ENCODE measurements at regions of chr2 and their contacts with region 1.

Region 1: DNA sequence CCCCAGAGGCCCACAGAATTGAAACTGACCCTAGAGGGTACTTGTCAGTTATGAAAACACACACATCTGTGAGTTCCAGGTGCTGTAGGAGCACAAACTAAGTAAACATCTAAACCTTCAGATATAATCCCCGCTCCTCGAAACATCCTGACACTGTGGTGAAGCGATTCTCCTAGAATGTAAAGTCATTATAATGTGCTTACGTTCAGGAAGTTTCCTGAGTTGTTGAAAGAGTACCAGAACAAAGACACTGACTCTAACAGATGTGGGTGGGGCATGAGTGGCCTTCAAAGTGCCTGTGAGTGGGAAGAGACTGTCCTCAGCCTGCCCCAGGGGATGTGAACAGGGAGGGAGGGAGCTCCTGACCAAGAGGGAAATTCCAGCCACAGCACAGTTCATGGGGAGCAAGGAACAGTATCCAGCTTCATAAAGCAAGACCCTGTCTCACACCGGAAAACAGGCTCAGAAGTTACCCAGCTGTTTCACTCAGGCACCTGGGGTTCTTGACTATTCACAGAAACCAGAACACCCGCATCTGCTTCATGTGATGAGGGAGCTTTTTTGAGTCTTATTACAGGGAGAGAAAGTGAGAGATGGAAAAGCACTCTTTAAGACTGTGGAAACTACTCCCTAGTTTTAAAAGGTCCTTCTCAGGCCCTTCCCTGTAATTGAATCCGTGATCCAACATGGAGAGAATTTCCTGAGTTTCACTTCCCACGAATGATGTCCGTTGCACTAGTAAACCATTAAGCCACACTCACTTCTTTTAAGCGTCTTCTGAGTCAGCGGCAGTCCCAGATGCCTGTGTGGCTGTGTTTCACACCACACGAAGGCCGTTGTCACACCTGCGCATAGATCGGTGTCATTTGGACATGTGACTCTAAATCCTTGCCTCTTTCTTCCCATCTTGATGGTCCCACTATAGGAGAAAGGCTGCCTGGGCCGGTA is 88.6 kb upstream of the EML6 start:
- DNase-seq: peak; percentile 59 to 86
- ATAC-seq: peak; percentile 72 to 87 (median 84)
- H3K4me3 ChIP-seq: peak overlapping the region in 4 of 10 donors; percentile 2 to 32 (median 12)
- H3K27ac ChIP-seq: peak overlapping the region; percentile 62 to 95 (median 88)
- H3K4me1 ChIP-seq: peaks cover 65 to 100% (median 100%) of the 10 kb centered on the region in 9 donors
- H3K27me3 ChIP-seq: no peaks in the 10 kb centered on the region
- CTCF ChIP-seq: no peak

Region 2: GRCh38 chr2:54206596-54206995 is 428.2 kb before region 1 on chr2:
- intact Hi-C with region 1: loop called in 1 of 10 experiments (anchors 10 kb)
- DNase-seq: no peak
- ATAC-seq: peak in 4 of 8 donors; percentile 34 to 66 (median 42)
- H3K4me3 ChIP-seq: no peak overlapping the region
- H3K27ac ChIP-seq: peak overlapping the region in 1 of 10 donors; percentile 84
- H3K4me1 ChIP-seq: peaks cover 2 to 36% (median 33%) of the 10 kb centered on the region in 9 donors
- H3K27me3 ChIP-seq: no peaks in the 10 kb centered on the region
- CTCF ChIP-seq: peak; percentile 50 to 87 (median 71)

Region 3: GRCh38 chr2:54461261-54461660 is 173.6 kb before region 1 on chr2:
- intact Hi-C with region 1: loop called in 1 of 10 experiments (anchors 10 kb)
- DNase-seq: no peak
- ATAC-seq: peak in 5 of 8 donors; percentile 11 to 50 (median 41)
- H3K4me3 ChIP-seq: peak overlapping the region in 2 of 10 donors; percentile 0 to 79
- H3K27ac ChIP-seq: peak overlapping the region in 9 of 10 donors; percentile 30 to 98 (median 75)
- H3K4me1 ChIP-seq: peaks cover 12 to 85% (median 72%) of the 10 kb centered on the region in 9 donors
- H3K27me3 ChIP-seq: peaks cover 0 to 30% (median 0%) of the 10 kb centered on the region in 7 donors
- CTCF ChIP-seq: no peak

Region 4: DNA sequence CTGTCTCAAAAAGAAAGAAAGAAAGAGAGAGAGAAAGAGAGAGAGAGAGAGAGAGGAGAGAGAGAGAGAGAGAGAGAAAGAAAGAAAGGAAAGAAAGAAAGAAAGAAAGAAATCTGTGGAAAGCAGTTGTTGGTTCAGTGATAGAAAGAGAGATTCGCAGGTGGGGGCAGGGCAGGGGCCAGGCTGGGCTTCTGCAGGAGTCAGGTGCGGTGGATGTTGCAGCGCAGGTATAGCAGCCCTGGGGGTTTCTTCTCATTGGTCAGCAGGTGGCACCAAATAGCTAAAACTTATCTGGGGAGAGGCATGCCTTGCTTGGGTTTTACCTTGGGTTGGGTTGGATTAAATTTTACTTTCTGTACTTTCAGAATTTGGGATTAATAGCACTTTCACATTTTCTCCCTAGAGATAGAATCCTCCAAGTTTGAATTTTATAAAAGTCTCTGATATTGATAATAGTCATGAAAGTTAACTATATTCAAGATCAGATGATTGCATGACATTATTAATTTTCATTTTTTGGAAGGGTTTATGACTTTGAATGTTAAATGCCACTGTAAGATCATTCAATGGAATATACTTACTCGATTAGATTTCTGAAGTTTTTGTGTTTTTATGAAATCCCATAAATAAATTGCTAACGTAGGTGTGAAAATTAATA is 112.1 kb before region 1 on chr2:
- intact Hi-C with region 1: loop called in 5 of 10 experiments (anchors 5 to 10 kb)
- DNase-seq: peak in 1 of 2 donors; percentile 57
- ATAC-seq: peak in 6 of 8 donors; percentile 28 to 55 (median 46)
- H3K4me3 ChIP-seq: no peak overlapping the region
- H3K27ac ChIP-seq: peak overlapping the region in 5 of 10 donors; percentile 70 to 86 (median 76)
- H3K4me1 ChIP-seq: peaks cover 21 to 99% (median 95%) of the 10 kb centered on the region in 9 donors
- H3K27me3 ChIP-seq: no peaks in the 10 kb centered on the region
- CTCF ChIP-seq: peak; percentile 26 to 74 (median 66)

Region 5: GRCh38 chr2:54570925-54571694 is 63.7 kb before region 1 on chr2:
- intact Hi-C with region 1: loop called in 3 of 10 experiments (anchors 5 to 10 kb)
- DNase-seq: peak in 1 of 2 donors; percentile 61
- ATAC-seq: peak; percentile 31 to 68 (median 52)
- H3K4me3 ChIP-seq: peak overlapping the region in 1 of 10 donors; percentile 0
- H3K27ac ChIP-seq: peak overlapping the region in 9 of 10 donors; percentile 59 to 89 (median 78)
- H3K4me1 ChIP-seq: peaks cover 54 to 99% (median 95%) of the 10 kb centered on the region in 9 donors
- H3K27me3 ChIP-seq: no peaks in the 10 kb centered on the region
- CTCF ChIP-seq: no peak